ENCODE measurements at regions of chr17 and their contacts with region 1.

Region 1: GRCh38 chr17:38752119-38752929 is at the start of gene PSMB3:
- DNase-seq: peak; percentile 98
- ATAC-seq: peak; percentile 77 to 85
- total RNA-seq, gene PSMB3: 139 to 163 TPM

Region 2: DNA sequence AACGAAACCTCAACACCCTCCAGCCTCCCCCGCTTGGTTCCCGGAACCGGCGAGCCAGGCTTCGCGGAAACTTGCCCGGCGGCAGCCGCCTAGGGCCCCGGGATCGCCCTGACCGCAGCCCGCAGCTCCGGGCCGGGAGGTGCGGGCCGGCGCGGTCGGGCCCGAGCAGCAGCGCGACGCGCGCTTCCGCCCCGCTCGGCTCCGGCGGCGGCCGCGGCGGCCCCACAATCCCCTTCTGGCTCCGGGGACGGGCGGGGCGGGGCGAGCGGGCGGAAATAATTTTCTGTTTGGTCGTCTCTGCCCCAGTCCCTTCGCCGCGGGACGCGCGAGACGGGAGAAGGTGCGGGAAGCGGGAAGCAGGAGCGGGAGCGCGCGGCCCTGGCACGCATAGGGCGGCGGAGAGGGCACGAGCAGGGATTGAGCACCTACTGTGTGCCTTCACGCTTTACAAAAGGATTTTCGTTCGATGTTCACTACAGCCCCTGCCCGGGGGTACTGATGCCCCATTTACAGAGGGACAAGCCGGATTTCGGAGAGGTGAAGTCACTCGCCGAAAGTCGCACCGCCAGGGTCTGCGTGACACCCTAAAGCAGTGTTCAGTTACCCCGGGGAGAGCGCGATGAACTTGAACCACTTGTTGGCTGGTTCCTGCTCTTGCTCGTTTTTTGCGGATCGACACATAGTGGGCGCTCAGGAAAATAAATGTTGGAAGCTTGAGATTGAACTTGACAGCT is 50.0 kb before region 1 on chr17:
- intact Hi-C with region 1: loop called in 1 of 2 experiments (anchors 5 kb)
- DNase-seq: peak; percentile 91
- ATAC-seq: peak; percentile 73 to 82

Region 3: GRCh38 chr17:38777641-38778250 is 25.4 kb after region 1 on chr17:
- intact Hi-C with region 1: no loop called
- DNase-seq: no peak
- ATAC-seq: no peak

Region 4: DNA sequence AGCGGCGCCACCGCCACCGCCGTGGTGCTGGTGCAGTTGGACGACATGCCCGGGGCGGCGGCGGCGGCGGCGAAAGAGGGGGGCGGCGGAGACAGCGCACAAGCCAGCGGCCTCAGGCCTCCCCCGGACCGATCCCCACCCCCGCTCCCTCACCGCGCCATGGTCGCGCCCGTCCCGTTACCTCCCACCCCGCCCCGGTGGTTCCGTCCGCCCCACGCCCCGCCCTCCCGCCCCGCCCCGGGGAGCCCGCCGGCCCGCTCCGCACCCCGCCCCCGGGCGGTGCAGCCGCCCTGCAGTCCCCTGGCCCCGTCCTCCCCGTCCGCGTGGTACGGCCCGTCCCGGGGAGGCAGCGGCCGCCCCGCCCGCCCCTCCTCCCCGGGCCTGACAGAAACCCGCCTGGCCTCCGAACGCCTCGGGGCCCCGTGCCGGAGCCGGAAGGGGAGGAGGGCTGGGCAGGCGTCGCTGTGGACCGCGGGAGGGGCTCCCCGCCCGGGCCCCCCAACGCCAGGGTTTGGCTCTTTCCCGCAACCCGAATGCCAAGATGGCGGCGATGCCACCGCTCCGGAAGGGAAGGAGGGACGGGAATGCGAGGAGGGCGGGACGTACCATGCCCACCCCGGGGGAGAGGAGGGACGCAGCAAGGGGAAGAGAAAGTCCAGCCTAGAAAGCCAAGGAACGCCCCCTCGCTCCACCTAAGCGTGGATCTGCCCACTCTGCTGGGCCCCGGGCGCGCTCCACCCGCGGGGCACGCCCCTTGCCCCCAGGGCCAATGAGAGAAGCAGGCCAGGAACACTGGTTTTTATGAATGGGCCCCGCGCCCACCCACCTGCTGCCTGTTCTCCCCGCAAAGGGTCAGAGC is 47.3 kb after region 1 on chr17 and contains the start of gene PIP4K2B:
- intact Hi-C with region 1: loop called in 1 of 2 experiments (anchors 5 kb)
- DNase-seq: peak; percentile 97
- ATAC-seq: peak; percentile 94 to 97
- total RNA-seq, gene PIP4K2B: 36.1 to 42.0 TPM

Region 5: GRCh38 chr17:39153599-39154051 is 401.3 kb after region 1 on chr17:
- intact Hi-C with region 1: loop called in 1 of 2 experiments (anchors 5 kb)
- DNase-seq: peak; percentile 87
- ATAC-seq: peak; percentile 87 to 92

Measured in left cardiac atrium (tissue), 4 donors.